Heart right ventricle (tissue), 16 donors: ENCODE measurements at regions of chr15 and their contacts with region 1.

Region 1: DNA sequence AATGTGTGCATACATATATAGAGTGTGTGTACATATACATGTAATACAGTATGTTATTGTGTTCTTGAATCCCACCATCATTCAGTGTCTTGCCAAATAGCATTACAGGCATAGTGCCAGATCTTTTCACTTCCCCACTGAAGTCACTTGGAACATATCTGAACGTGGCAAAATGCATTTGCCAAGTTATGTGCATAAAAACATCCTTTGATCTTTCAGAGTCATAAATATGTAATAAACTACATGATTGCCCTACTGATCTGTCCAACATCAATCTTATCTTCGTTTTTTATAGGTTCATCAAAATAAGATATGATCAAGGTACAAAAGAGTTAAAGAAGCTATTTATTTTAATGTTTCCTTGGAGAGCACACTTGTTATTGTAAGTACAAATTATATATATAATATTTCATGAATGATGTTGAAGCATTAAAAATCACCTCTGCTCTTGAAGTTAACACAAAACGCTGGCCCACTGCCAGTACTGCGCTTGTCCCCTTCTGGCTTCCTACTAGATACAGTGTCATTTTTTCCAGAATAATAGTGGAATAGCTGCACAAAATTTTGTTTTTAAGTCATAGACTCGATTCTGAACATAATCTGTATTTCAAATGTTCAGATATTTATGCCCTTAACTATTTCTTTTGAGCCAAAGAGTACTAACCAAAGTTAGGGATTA is 549.5 kb upstream of the ARRDC4 start:
- DNase-seq: no peak
- ATAC-seq: no peak
- H3K4me3 ChIP-seq: no peak overlapping the region
- H3K27ac ChIP-seq: no peak overlapping the region
- H3K4me1 ChIP-seq: no peaks in the 10 kb centered on the region
- H3K27me3 ChIP-seq: no peaks in the 10 kb centered on the region
- CTCF ChIP-seq: no peak

Region 2: GRCh38 chr15:96893159-96893906 is 517.7 kb before region 1 on chr15:
- intact Hi-C with region 1: no loop called
- DNase-seq: no peak
- ATAC-seq: no peak
- H3K4me3 ChIP-seq: no peak overlapping the region
- H3K27ac ChIP-seq: no peak overlapping the region
- H3K4me1 ChIP-seq: peaks cover 0 to 10% (median 0%) of the 10 kb centered on the region in 9 donors
- H3K27me3 ChIP-seq: peaks cover 0 to 9% (median 0%) of the 10 kb centered on the region in 7 donors
- CTCF ChIP-seq: peak in 8 of 9 donors; percentile 8 to 66 (median 52)

Region 3: DNA sequence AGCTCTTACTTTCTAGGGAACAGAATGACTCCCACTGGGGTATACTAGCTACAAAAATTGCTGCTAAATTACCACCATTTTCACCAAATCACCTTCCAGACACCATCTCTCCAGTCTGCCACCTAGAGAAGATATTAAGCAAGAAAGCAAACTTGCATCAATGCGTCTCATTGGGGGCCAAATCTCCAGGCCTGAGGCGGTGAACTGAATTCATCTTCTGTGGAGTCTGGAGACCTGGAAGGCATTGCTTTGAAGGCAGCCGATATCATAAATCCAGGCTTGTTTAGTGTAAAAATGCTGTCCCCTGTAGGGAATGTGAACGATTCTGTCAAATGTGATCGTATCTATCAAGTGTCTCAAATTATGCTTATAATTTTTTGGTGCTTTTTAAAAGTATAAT is 198.8 kb before region 1 on chr15:
- intact Hi-C with region 1: no loop called
- DNase-seq: no peak
- ATAC-seq: no peak
- H3K4me3 ChIP-seq: no peak overlapping the region
- H3K27ac ChIP-seq: no peak overlapping the region
- H3K4me1 ChIP-seq: no peaks in the 10 kb centered on the region
- H3K27me3 ChIP-seq: no peaks in the 10 kb centered on the region
- CTCF ChIP-seq: no peak

Region 4: GRCh38 chr15:97456521-97457202 is 45.6 kb after region 1 on chr15:
- intact Hi-C with region 1: loop called in 1 of 10 experiments (anchors 1 kb)
- DNase-seq: no peak
- ATAC-seq: no peak
- H3K4me3 ChIP-seq: no peak overlapping the region
- H3K27ac ChIP-seq: no peak overlapping the region
- H3K4me1 ChIP-seq: peaks cover 0 to 17% (median 0%) of the 10 kb centered on the region in 9 donors
- H3K27me3 ChIP-seq: no peaks in the 10 kb centered on the region
- CTCF ChIP-seq: no peak